ENCODE measurements at regions of chr14 and their contacts with region 1.

Region 1: DNA sequence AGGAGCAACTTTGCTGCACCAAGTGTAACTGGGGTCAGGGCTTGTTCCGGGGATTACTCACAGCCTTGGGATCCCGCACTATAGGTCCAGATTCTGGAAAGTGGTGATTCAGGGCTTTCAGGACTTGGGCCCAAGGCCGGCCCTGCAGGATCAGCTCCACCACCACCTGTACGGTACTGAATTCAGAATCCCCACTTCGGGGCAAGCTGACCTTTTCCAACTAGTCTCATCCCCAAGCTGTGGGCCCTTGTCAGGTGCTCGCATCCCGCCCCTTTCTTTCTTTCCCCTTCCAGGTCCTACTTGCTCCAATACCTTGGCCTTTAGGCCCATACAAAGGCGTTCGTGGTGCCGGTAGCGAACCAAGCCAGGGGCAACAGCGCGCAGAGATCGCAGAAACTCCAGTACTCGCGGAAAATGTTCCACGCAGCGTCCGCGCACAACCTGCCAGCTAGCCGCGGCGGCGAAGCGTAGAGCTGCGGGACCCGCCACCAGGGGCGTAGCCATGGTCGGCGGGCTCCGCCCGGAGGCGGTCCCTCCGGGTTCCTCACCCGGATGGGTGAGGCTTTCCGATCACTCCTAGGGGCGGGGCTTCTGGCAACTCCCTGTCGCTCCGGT is 487 bp downstream of the TINF2 start:
- DNase-seq: peak; percentile 96 to 98 (median 97)
- H3K4me3 ChIP-seq: peak overlapping the region; percentile 79 to 81
- H3K4me3 Mint-ChIP-seq: peak overlapping the region; percentile 87 to 99 (median 94)
- H3K27ac ChIP-seq: peak overlapping the region; percentile 96
- H3K27ac Mint-ChIP-seq: peak overlapping the region; percentile 99 to 100 (median 99)
- H3K4me1 ChIP-seq: peaks cover 55% of the 10 kb centered on the region
- H3K4me1 Mint-ChIP-seq: peaks cover 35 to 77% (median 57%) of the 10 kb centered on the region in 4 donors
- H3K27me3 ChIP-seq: no peaks in the 10 kb centered on the region
- H3K27me3 Mint-ChIP-seq: no peaks in the 10 kb centered on the region

Region 2: GRCh38 chr14:24093901-24094761 is 147.8 kb before region 1 on chr14 and contains the start of gene PCK2:
- CTCF ChIA-PET with region 1: interaction called, 10 read pairs
- POLR2A ChIA-PET with region 1: interaction called, 8 read pairs
- intact Hi-C with region 1: no loop called
- DNase-seq: peak; percentile 53 to 75 (median 61)
- H3K4me3 ChIP-seq: peak within 1 kb of the TSS; percentile 82 to 90
- H3K4me3 Mint-ChIP-seq: peak within 1 kb of the TSS; percentile 91 to 100 (median 98)
- H3K27ac ChIP-seq: peak within 1 kb of the TSS; percentile 84
- H3K27ac Mint-ChIP-seq: peak within 1 kb of the TSS; percentile 84 to 98 (median 97)
- H3K4me1 ChIP-seq: peaks cover 26% of the 10 kb centered on the region
- H3K4me1 Mint-ChIP-seq: peaks cover 21 to 47% (median 33%) of the 10 kb centered on the region in 4 donors
- H3K27me3 ChIP-seq: no peaks in the 10 kb centered on the region
- H3K27me3 Mint-ChIP-seq: no peaks in the 10 kb centered on the region
- total RNA-seq, gene PCK2: 18.3 to 21.4 TPM

Region 3: GRCh38 chr14:24146978-24147760 is 94.8 kb before region 1 on chr14 and contains the start of gene RNF31:
- CTCF ChIA-PET with region 1: interaction called, 3 read pairs
- POLR2A ChIA-PET with region 1: interaction called, 25 read pairs
- intact Hi-C with region 1: loop called (anchors 2 kb)
- DNase-seq: peak; percentile 95 to 99 (median 97)
- H3K4me3 ChIP-seq: peak within 1 kb of the TSS; percentile 85 to 99
- H3K4me3 Mint-ChIP-seq: peak within 1 kb of the TSS; percentile 97 to 100 (median 98)
- H3K27ac ChIP-seq: peak within 1 kb of the TSS; percentile 92
- H3K27ac Mint-ChIP-seq: peak within 1 kb of the TSS; percentile 95 to 99 (median 98)
- H3K4me1 ChIP-seq: peaks cover 63% of the 10 kb centered on the region
- H3K4me1 Mint-ChIP-seq: peaks cover 32 to 80% (median 54%) of the 10 kb centered on the region in 4 donors
- H3K27me3 ChIP-seq: no peaks in the 10 kb centered on the region
- H3K27me3 Mint-ChIP-seq: no peaks in the 10 kb centered on the region
- total RNA-seq, gene RNF31: 108 to 113 TPM

Region 4: GRCh38 chr14:24215495-24216344 is 26.2 kb before region 1 on chr14 and contains the start of gene MDP1:
- CTCF ChIA-PET with region 1: interaction called, 68 read pairs
- POLR2A ChIA-PET with region 1: interaction called, 171 read pairs
- intact Hi-C with region 1: loop called (anchors 1 kb)
- DNase-seq: peak; percentile 86 to 92 (median 88)
- H3K4me3 ChIP-seq: peak within 1 kb of the TSS; percentile 94 to 95
- H3K4me3 Mint-ChIP-seq: peak within 1 kb of the TSS; percentile 90 to 97 (median 93)
- H3K27ac ChIP-seq: peak within 1 kb of the TSS; percentile 100
- H3K27ac Mint-ChIP-seq: peak within 1 kb of the TSS; percentile 95 to 100 (median 99)
- H3K4me1 ChIP-seq: peaks cover 42% of the 10 kb centered on the region
- H3K4me1 Mint-ChIP-seq: peaks cover 30 to 56% (median 44%) of the 10 kb centered on the region in 4 donors
- H3K27me3 ChIP-seq: no peaks in the 10 kb centered on the region
- H3K27me3 Mint-ChIP-seq: no peaks in the 10 kb centered on the region
- total RNA-seq, gene MDP1: 12.5 to 15.3 TPM

Region 5: GRCh38 chr14:24289649-24290249 is 47.8 kb after region 1 on chr14:
- CTCF ChIA-PET with region 1: interaction called, 27 read pairs
- POLR2A ChIA-PET with region 1: interaction called, 14 read pairs
- intact Hi-C with region 1: no loop called
- DNase-seq: peak in 2 of 5 donors; percentile 18 to 68
- H3K4me3 ChIP-seq: no peak overlapping the region
- H3K4me3 Mint-ChIP-seq: no peak overlapping the region
- H3K27ac ChIP-seq: no peak overlapping the region
- H3K27ac Mint-ChIP-seq: peak overlapping the region in 2 of 7 donors; percentile 6 to 46
- H3K4me1 ChIP-seq: peaks cover 12% of the 10 kb centered on the region
- H3K4me1 Mint-ChIP-seq: peaks cover 0 to 20% (median 6%) of the 10 kb centered on the region in 4 donors
- H3K27me3 ChIP-seq: no peaks in the 10 kb centered on the region
- H3K27me3 Mint-ChIP-seq: no peaks in the 10 kb centered on the region

Region 6: GRCh38 chr14:24418492-24418873 is 176.5 kb after region 1 on chr14:
- CTCF ChIA-PET with region 1: interaction called, 10 read pairs
- POLR2A ChIA-PET with region 1: no interaction called
- intact Hi-C with region 1: no loop called
- DNase-seq: no peak
- H3K4me3 ChIP-seq: no peak overlapping the region
- H3K4me3 Mint-ChIP-seq: no peak overlapping the region
- H3K27ac ChIP-seq: no peak overlapping the region
- H3K27ac Mint-ChIP-seq: peak overlapping the region in 1 of 7 donors; percentile 48
- H3K4me1 ChIP-seq: peaks cover 16% of the 10 kb centered on the region
- H3K4me1 Mint-ChIP-seq: no peaks in the 10 kb centered on the region
- H3K27me3 ChIP-seq: no peaks in the 10 kb centered on the region
- H3K27me3 Mint-ChIP-seq: no peaks in the 10 kb centered on the region

Region 7: GRCh38 chr14:24578558-24578957 is 336.6 kb after region 1 on chr14:
- CTCF ChIA-PET with region 1: no interaction called
- POLR2A ChIA-PET with region 1: no interaction called
- intact Hi-C with region 1: no loop called
- DNase-seq: no peak
- H3K4me3 ChIP-seq: no peak overlapping the region
- H3K4me3 Mint-ChIP-seq: no peak overlapping the region
- H3K27ac ChIP-seq: no peak overlapping the region
- H3K27ac Mint-ChIP-seq: no peak overlapping the region
- H3K4me1 ChIP-seq: no peaks in the 10 kb centered on the region
- H3K4me1 Mint-ChIP-seq: no peaks in the 10 kb centered on the region
- H3K27me3 ChIP-seq: no peaks in the 10 kb centered on the region
- H3K27me3 Mint-ChIP-seq: peaks cover 4 to 10% of the 10 kb centered on the region in 2 donors